HepG2 (cell line): ENCODE measurements at regions of chr1 and their contacts with region 1.

Region 1: DNA sequence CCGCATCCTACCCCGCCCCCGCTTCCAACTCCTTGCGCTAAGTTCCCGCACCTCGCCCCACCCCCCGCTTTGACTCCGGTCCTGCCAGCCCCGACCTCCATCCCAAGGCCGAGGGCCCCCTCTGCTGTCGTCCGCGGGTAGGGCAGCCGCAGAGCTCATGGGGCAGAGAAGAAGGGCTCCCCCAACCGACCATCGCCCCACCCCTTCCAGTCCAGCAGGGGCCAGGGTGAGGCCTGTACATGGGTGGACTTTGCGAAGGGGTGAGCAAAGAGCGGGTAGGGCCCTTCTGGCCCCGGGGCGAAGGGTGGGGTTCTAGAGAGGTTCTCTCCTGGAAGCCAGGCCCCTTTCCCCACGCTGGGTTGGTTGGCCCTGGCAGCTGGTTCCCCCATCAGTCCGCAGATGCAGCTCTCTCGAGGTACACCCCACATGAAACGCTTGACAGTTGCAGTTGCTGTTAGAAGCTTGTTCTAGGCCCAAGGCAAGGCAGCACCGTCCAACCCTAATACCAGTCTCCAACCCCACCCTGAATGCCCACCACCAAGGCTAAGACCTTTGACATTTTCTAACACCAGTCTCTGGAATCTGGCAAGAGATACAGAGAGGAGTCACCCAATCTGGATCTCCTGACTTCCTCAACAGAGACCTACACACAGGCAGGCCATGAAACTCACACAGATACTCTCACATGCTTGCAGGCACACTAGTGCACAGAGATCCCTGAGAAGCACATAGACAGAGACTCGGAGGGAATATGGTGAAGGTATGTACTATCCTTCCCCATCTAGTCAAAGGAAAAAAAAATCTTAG is 25.3 kb upstream of the ADGRB2 start:
- DNase-seq: peak; percentile 77
- ATAC-seq: peak; percentile 88
- H3K4me3 ChIP-seq: peak overlapping the region; percentile 51 to 75 (median 59)
- H3K27ac ChIP-seq: no peak overlapping the region
- H3K4me1 ChIP-seq: peaks cover 22% of the 10 kb centered on the region
- H3K27me3 ChIP-seq: peaks cover 3 to 19% of the 10 kb centered on the region in 2 experiments; a peak in 2 of 5 replicates
- CTCF ChIP-seq: peak; percentile 97
- EP300 ChIP-seq: no peak
- POLR2A ChIP-seq: no peak
- RAD21 ChIP-seq: peak; percentile 92

Region 2: GRCh38 chr1:31663622-31664452 is 125.6 kb before region 1 on chr1:
- CTCF ChIA-PET with region 1: interaction called, 29 read pairs
- POLR2A ChIA-PET with region 1: interaction called, 3 read pairs
- in situ Hi-C with region 1: loop called (anchors 5 kb)
- intact Hi-C with region 1: no loop called
- DNase-seq: peak; percentile 28
- ATAC-seq: peak; percentile 54
- H3K4me3 ChIP-seq: no peak overlapping the region
- H3K27ac ChIP-seq: no peak overlapping the region
- H3K4me1 ChIP-seq: peaks cover 10% of the 10 kb centered on the region
- H3K27me3 ChIP-seq: no peaks in the 10 kb centered on the region
- CTCF ChIP-seq: peak; percentile 93
- EP300 ChIP-seq: no peak
- POLR2A ChIP-seq: no peak
- RAD21 ChIP-seq: peak; percentile 95

Region 3: DNA sequence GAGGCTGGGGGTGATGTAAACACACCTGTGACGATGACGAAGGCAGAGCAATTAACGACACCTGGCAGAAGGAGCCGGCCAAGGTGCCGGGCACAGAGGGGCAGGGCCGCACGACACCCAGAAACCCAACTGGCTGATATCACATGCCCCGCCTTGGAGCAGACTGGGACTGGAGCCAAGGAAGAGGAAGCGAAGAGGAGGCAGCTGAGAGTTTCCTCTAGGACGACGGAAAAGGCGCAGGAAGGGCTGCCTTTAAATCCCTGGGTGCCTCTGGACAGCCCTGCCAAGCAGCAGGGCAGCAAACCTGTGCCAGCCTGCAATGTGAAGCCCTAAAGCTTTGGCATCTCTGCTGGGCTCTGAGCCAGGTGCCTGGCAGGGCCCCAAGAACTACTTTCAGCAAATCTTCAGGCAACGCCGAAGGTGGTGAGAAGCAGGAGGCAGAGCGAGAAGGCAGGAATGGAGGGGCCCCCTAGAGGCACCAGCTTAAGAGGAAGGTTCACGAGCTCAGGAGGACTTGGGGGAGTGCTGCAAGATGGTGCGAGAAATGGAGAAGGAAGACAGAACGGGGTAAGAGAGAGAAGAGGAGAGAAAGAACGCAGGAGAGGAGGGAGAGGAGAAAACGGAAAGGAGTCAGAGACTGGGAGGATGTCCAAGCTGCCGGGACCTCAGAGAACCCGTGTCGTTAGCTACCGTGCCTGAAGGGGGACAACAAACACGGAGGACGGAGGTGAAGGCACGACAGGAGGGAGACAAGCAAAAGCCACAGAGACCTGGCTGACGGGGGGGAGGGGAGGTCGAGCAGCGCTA is 119.5 kb before region 1 on chr1:
- CTCF ChIA-PET with region 1: interaction called, 3 read pairs
- POLR2A ChIA-PET with region 1: interaction called, 3 read pairs
- in situ Hi-C with region 1: loop called (anchors 5 kb)
- intact Hi-C with region 1: no loop called
- DNase-seq: no peak
- ATAC-seq: no peak
- H3K4me3 ChIP-seq: no peak overlapping the region
- H3K27ac ChIP-seq: no peak overlapping the region
- H3K4me1 ChIP-seq: peaks cover 10% of the 10 kb centered on the region
- H3K27me3 ChIP-seq: no peaks in the 10 kb centered on the region
- CTCF ChIP-seq: no peak
- EP300 ChIP-seq: no peak
- POLR2A ChIP-seq: no peak
- RAD21 ChIP-seq: no peak

Region 4: DNA sequence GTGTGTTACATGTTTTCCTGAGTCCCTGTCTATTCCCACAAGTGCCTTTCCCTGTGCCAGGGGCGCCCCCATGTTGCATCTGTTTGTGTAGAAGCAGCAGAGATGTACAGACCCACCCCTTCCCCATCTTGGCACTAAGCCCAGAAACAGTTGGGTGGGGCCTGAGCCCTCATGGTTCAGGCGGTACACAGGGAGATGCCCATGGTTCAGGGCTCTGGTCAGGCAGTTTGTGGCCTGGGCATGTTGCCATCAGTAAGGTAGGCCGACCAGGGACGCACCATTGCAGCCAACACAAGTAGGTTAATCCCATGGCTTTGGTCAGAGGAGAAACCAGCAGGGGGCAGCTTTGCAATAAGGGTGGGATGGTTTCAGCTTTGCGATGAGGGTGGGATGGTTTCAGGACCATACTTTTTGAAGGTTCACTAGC is 24.4 kb before region 1 on chr1:
- CTCF ChIA-PET with region 1: interaction called, 5 read pairs
- POLR2A ChIA-PET with region 1: no interaction called
- in situ Hi-C with region 1: no loop called
- intact Hi-C with region 1: loop called (anchors 2 kb)
- DNase-seq: no peak
- ATAC-seq: peak; percentile 22
- H3K4me3 ChIP-seq: no peak overlapping the region
- H3K27ac ChIP-seq: no peak overlapping the region
- H3K4me1 ChIP-seq: peaks cover 43% of the 10 kb centered on the region
- H3K27me3 ChIP-seq: peaks cover 14 to 66% of the 10 kb centered on the region in 2 experiments
- CTCF ChIP-seq: peak; percentile 55
- EP300 ChIP-seq: no peak
- POLR2A ChIP-seq: no peak
- RAD21 ChIP-seq: no peak

Region 5: DNA sequence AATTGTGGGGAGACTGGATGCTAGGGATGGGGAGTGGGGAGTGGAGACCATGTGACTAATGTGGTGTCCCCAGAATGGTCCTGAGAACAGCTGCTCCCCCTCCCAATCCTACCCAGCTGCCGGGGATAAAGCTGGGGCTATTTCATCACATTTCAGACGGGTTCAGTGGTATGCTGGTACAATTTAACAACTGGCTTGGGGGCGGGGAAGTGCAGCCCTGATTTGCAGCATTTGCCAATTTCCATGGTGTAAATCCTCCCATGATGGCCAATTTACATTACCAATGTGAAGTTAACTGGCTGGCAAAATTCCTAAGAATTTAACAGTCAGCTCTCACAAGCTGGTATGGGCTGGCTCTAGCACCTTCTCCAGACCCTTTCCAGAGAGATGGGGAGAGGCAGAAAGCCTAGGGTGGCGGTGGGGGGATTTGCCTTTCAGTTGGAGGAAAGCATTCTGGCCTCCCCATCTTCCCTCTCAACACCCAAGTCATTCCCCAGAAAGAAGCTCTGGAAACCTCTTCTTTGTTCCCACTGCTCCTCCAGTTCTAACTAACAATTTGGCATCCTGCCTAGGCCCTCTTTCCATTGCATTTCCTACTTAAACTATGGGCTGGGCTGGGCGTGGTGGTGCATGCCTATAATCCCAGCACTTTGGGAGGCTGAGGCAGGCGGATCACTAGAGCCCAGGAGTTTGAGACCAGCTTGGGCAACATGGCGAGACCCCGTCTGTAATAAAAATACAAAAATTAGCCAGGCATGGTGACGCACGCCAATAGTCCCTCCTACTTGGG is 14.1 kb before region 1 on chr1:
- CTCF ChIA-PET with region 1: no interaction called
- POLR2A ChIA-PET with region 1: no interaction called
- in situ Hi-C with region 1: no loop called
- intact Hi-C with region 1: no loop called
- DNase-seq: no peak
- ATAC-seq: no peak
- H3K4me3 ChIP-seq: no peak overlapping the region
- H3K27ac ChIP-seq: no peak overlapping the region
- H3K4me1 ChIP-seq: no peaks in the 10 kb centered on the region
- H3K27me3 ChIP-seq: peaks cover 7 to 57% of the 10 kb centered on the region in 2 experiments; a peak in 4 of 5 replicates
- CTCF ChIP-seq: no peak
- EP300 ChIP-seq: no peak
- POLR2A ChIP-seq: no peak
- RAD21 ChIP-seq: no peak